Adrenal gland (tissue), 19 donors: ENCODE measurements at regions of chr22 and their contacts with region 1.

Region 1: GRCh38 chr22:38766076-38766777 is 10.4 kb upstream of the SUN2 start:
- DNase-seq: peak; percentile 83 to 93 (median 90)
- H3K4me3 ChIP-seq: no peak overlapping the region
- H3K27ac ChIP-seq: no peak overlapping the region
- H3K4me1 ChIP-seq: no peaks in the 10 kb centered on the region
- H3K27me3 ChIP-seq: no peaks in the 10 kb centered on the region
- CTCF ChIP-seq: peak; percentile 68 to 81 (median 79)
- POLR2A ChIP-seq: no peak

Region 2: DNA sequence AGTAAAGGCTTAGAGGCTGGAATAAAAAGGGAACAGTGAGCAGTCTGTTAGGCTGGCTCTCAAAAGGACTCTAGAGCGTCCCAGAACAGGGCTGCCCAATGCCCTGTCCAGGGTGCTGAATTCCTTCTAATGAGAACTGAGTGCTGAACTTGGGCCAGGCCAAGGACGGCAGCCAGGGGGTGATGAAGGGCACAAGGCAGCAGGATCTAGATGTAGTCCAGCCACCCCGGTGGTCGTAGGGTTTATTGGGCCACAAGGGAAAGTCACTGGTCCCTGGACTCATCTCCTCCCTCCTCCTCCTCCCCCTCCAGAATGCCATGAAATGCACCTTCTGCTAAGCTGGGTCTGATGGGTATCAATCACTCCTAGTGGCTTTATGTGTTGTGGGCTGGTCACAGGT is 58.4 kb after region 1 on chr22:
- intact Hi-C with region 1: no loop called
- DNase-seq: peak; percentile 60 to 70 (median 66)
- H3K4me3 ChIP-seq: no peak overlapping the region
- H3K27ac ChIP-seq: no peak overlapping the region
- H3K4me1 ChIP-seq: no peaks in the 10 kb centered on the region
- H3K27me3 ChIP-seq: no peaks in the 10 kb centered on the region
- CTCF ChIP-seq: peak in 5 of 6 experiments; percentile 12 to 38 (median 33)
- POLR2A ChIP-seq: no peak

Region 3: GRCh38 chr22:38843201-38843715 is 77.0 kb after region 1 on chr22:
- intact Hi-C with region 1: loop called (anchors 5 to 10 kb)
- DNase-seq: peak; percentile 33 to 61 (median 56)
- H3K4me3 ChIP-seq: peak overlapping the region in 1 of 4 donors; percentile 62
- H3K27ac ChIP-seq: peak overlapping the region in 2 of 5 donors; percentile 52 to 88
- H3K4me1 ChIP-seq: peaks cover 3 to 11% of the 10 kb centered on the region in 2 donors
- H3K27me3 ChIP-seq: no peaks in the 10 kb centered on the region
- CTCF ChIP-seq: peak in 3 of 6 experiments; percentile 30 to 59 (median 44)
- POLR2A ChIP-seq: peak; percentile 1 to 29

Region 4: GRCh38 chr22:39117585-39118191 is 351.5 kb after region 1 on chr22:
- intact Hi-C with region 1: loop called in 1 of 2 experiments (anchors 10 kb)
- DNase-seq: peak in 6 of 7 donors; percentile 51 to 84 (median 68)
- H3K4me3 ChIP-seq: no peak overlapping the region
- H3K27ac ChIP-seq: no peak overlapping the region
- H3K4me1 ChIP-seq: no peaks in the 10 kb centered on the region
- H3K27me3 ChIP-seq: no peaks in the 10 kb centered on the region
- CTCF ChIP-seq: peak; percentile 23 to 65 (median 52)
- POLR2A ChIP-seq: no peak